Transverse colon (tissue), 4 donors: ENCODE measurements at regions of chr21 and their contacts with region 1.

Region 1: GRCh38 chr21:21163904-21164303 is 165.7 kb downstream of the NCAM2 start:
- DNase-seq: peak; percentile 40
- H3K4me3 ChIP-seq: no peak overlapping the region
- H3K27ac ChIP-seq: no peak overlapping the region
- H3K4me1 ChIP-seq: peaks cover 0 to 20% (median 0%) of the 10 kb centered on the region in 4 donors
- H3K27me3 ChIP-seq: no peaks in the 10 kb centered on the region
- CTCF ChIP-seq: peak; percentile 53 to 68 (median 59)
- EP300 ChIP-seq: no peak
- POLR2A ChIP-seq: no peak

Region 2: GRCh38 chr21:21921421-21922232 is 757.7 kb after region 1 on chr21:
- in situ Hi-C with region 1: loop called in 1 of 4 experiments (anchors 25 kb)
- intact Hi-C with region 1: no loop called
- DNase-seq: no peak
- H3K4me3 ChIP-seq: no peak overlapping the region
- H3K27ac ChIP-seq: no peak overlapping the region
- H3K4me1 ChIP-seq: no peaks in the 10 kb centered on the region
- H3K27me3 ChIP-seq: no peaks in the 10 kb centered on the region
- CTCF ChIP-seq: peak; percentile 44 to 60 (median 52)
- EP300 ChIP-seq: no peak
- POLR2A ChIP-seq: no peak